ENCODE measurements at regions of chr2 and their contacts with region 1.

Region 1: DNA sequence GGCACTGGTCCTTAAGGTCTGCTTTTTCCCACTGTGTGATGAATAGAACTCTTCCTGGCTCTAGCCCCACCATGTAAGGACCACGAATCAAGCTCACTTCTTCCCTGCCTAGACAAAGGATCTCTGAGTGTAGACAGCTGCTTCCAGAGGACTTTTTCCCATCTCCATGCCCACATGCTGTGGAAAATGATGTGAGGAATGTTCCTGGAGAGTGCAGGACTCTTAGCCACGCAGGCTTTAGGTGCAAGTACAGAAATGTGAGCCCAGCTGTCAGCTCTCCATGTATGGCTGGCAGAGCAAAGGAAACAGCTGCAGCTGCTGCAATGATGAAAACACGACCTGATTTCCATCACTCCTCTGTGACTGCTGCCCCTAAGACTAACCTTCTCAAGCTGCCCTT is 35.5 kb downstream of the NXPH2 start:
- DNase-seq: no peak
- H3K4me3 ChIP-seq: no peak overlapping the region
- H3K27ac ChIP-seq: no peak overlapping the region
- H3K4me1 ChIP-seq: no peaks in the 10 kb centered on the region
- H3K27me3 ChIP-seq: no peaks in the 10 kb centered on the region
- CTCF ChIP-seq: no peak
- EP300 ChIP-seq: no peak
- POLR2A ChIP-seq: no peak

Region 2: GRCh38 chr2:139909136-139909535 is 1164.4 kb after region 1 on chr2:
- in situ Hi-C with region 1: no loop called
- intact Hi-C with region 1: loop called (anchors 10 kb)
- DNase-seq: no peak
- H3K4me3 ChIP-seq: no peak overlapping the region
- H3K27ac ChIP-seq: peak overlapping the region in 1 of 4 donors; percentile 17
- H3K4me1 ChIP-seq: peaks cover 0 to 7% (median 0%) of the 10 kb centered on the region in 4 donors
- H3K27me3 ChIP-seq: no peaks in the 10 kb centered on the region
- CTCF ChIP-seq: no peak
- EP300 ChIP-seq: no peak
- POLR2A ChIP-seq: no peak

Measured in transverse colon (tissue), 4 donors.